Psoas muscle (tissue), 8 donors: ENCODE measurements at regions of chr5 and their contacts with region 1.

Region 1: DNA sequence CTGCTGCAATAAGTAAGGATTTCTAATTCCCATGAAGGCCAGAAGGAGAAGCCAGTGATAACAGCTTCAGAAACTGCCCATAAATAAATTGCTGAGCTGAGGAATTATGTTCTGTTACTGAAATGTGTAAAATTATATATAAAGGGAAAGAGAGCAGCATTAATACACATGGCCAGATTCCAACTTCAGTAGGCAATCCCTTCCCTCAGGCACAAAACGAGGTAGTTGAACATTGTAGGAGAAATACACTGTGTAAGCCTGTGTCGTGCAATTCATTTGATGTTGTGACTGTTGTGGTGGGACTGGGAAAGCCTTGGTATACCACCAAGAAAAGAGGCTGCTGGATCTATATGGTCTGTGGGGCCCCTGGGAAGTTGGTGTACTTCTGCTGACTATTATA is 192.9 kb downstream of the WDR70 start:
- DNase-seq: no peak
- ATAC-seq: no peak
- H3K4me3 ChIP-seq: no peak overlapping the region
- H3K27ac ChIP-seq: no peak overlapping the region
- H3K4me1 ChIP-seq: peaks cover 32% of the 10 kb centered on the region
- H3K27me3 ChIP-seq: no peaks in the 10 kb centered on the region
- CTCF ChIP-seq: no peak

Region 2: GRCh38 chr5:37598733-37599132 is 26.7 kb after region 1 on chr5:
- intact Hi-C with region 1: loop called in 1 of 2 experiments (anchors 2 kb)
- DNase-seq: no peak
- ATAC-seq: no peak
- H3K4me3 ChIP-seq: no peak overlapping the region
- H3K27ac ChIP-seq: no peak overlapping the region
- H3K4me1 ChIP-seq: peaks cover 6% of the 10 kb centered on the region
- H3K27me3 ChIP-seq: no peaks in the 10 kb centered on the region
- CTCF ChIP-seq: no peak